Endothelial cell of umbilical vein (primary cell): ENCODE measurements at regions of chr22 and their contacts with region 1.

Region 1: DNA sequence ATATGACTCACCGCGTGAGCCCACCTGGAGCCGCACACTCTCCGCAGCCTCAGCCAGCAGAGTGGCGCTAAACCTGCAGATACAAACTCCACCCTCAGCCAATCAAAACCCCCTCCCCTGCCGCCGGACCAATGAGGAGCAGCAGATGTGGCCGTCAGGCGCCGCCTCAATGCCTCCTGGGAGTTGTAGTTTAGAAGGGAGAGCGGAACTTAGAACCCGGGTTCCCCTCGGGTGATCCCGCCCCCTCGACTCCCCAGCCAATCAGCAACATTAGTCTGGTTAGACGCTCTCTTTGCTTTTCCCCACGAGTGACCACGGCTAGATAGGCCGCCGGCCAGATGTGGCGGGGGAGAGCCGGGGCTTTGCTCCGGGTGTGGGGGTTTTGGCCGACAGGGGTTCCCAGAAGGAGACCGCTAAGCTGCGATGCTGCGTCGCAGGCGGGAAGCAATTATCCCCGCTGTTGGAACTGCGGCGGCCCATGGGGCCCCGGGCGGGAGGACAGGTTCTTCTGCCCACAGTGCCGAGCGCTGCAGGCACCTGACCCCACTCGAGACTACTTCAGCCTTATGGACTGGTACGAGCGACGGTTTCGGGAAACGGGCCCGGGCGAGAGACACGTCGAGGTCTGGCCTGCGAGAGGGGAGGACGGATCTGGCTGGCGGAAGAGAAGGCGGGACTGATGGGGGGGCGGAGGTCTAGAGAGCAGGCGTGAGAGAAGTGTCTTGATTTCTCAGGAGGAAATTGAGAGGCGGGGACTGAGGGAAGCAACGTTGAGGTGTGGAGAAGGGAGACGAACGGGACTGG is at the starts of genes CHEK2 and HSCB:
- DNase-seq: peak; percentile 99
- H3K4me3 ChIP-seq: peak within 1 kb of the TSS; percentile 75 to 87 (median 77)
- H3K27ac ChIP-seq: peak within 1 kb of the TSS; percentile 84
- H3K4me1 ChIP-seq: peaks cover 12% of the 10 kb centered on the region
- H3K27me3 ChIP-seq: no peaks in the 10 kb centered on the region
- CTCF ChIP-seq: peak in 1 of 2 donors; percentile 11
- POLR2A ChIP-seq: no peak
- total RNA-seq, gene CHEK2: 24.6 and 27.4 TPM in 2 replicates
- total RNA-seq, gene HSCB: 14.1 and 20.3 TPM in 2 replicates

Region 2: DNA sequence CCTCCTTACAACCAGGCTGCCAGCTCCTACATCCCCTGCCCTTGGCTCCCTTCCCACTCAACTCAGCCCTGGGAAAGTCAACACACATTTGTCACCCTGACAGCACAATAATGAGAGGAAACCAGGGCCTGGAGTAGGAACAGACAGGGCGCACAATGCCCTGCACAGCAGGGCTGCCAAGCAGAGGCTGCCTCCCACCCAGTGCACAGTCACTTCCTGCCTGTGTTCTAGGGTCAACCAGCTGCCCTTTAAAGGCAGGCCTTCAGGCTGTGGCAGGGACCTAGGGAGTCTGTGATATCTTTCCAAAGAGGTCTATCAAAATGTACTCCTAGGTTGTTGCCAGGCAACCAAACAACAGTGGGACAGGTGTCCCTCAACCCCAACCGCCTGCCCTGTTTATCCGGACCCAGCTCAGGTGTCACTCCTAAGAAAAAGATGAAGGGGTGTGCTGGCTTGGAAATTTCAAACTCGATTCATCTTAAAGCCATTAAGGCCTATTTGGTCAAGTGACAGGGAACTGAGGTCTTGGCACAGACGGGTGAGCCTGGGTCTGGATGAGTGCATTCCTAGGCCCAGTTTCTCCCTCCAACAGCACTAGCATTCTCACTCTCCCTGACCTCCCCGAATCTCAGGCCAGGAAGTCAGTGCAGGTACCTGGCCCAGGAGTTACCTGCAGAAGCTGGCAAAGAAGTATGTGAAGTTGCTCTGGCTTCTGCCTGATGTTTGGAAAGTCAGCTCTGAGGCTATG is 712.6 kb before region 1 on chr22:
- CTCF ChIA-PET with region 1: no interaction called
- POLR2A ChIA-PET with region 1: no interaction called
- dilution Hi-C with region 1: no loop called
- intact Hi-C with region 1: loop called (anchors 1 kb)
- DNase-seq: peak; percentile 99
- H3K4me3 ChIP-seq: no peak overlapping the region
- H3K27ac ChIP-seq: peak overlapping the region; percentile 91
- H3K4me1 ChIP-seq: peaks cover 45% of the 10 kb centered on the region
- H3K27me3 ChIP-seq: no peaks in the 10 kb centered on the region
- CTCF ChIP-seq: no peak
- POLR2A ChIP-seq: peak; percentile 71